Activated naive CD4-positive, alpha-beta T cell treated with anti-CD3 and anti-CD28 coated beads for 36 hours (primary cell): ENCODE measurements at regions of chr16 and their contacts with region 1.

Region 1: GRCh38 chr16:56513972-56514371 is 5.9 kb downstream of the BBS2 start:
- DNase-seq: peak; percentile 76
- H3K4me3 Mint-ChIP-seq: no peak overlapping the region
- H3K27ac Mint-ChIP-seq: no peak overlapping the region
- H3K4me1 Mint-ChIP-seq: peaks cover 41% of the 10 kb centered on the region
- H3K27me3 Mint-ChIP-seq: no peaks in the 10 kb centered on the region

Region 2: GRCh38 chr16:56257239-56257638 is 256.7 kb before region 1 on chr16:
- CTCF ChIA-PET with region 1: no interaction called
- intact Hi-C with region 1: no loop called
- DNase-seq: no peak
- H3K4me3 Mint-ChIP-seq: no peak overlapping the region
- H3K27ac Mint-ChIP-seq: no peak overlapping the region
- H3K4me1 Mint-ChIP-seq: peaks cover 4% of the 10 kb centered on the region
- H3K27me3 Mint-ChIP-seq: no peaks in the 10 kb centered on the region

Region 3: GRCh38 chr16:56401482-56401881 is 112.5 kb before region 1 on chr16:
- CTCF ChIA-PET with region 1: no interaction called
- intact Hi-C with region 1: no loop called
- DNase-seq: no peak
- H3K4me3 Mint-ChIP-seq: no peak overlapping the region
- H3K27ac Mint-ChIP-seq: no peak overlapping the region
- H3K4me1 Mint-ChIP-seq: no peaks in the 10 kb centered on the region
- H3K27me3 Mint-ChIP-seq: no peaks in the 10 kb centered on the region

Region 4: GRCh38 chr16:56600398-56600999 is 86.5 kb after region 1 on chr16:
- CTCF ChIA-PET with region 1: interaction called, 7 read pairs
- intact Hi-C with region 1: loop called (anchors 1 kb)
- DNase-seq: peak; percentile 44
- H3K4me3 Mint-ChIP-seq: no peak overlapping the region
- H3K27ac Mint-ChIP-seq: no peak overlapping the region
- H3K4me1 Mint-ChIP-seq: peaks cover 4% of the 10 kb centered on the region
- H3K27me3 Mint-ChIP-seq: peaks cover 5% of the 10 kb centered on the region